Dorsolateral prefrontal cortex (tissue), 120 donors: ENCODE measurements at regions of chr5 and their contacts with region 1.

Region 1: GRCh38 chr5:124773315-124774311 is 27.2 kb upstream of the ZNF608 start:
- DNase-seq: no peak
- H3K4me3 ChIP-seq: peak overlapping the region in 20 of 59 donors; percentile 2 to 35 (median 16)
- H3K27ac ChIP-seq: peak overlapping the region in 15 of 59 donors; percentile 2 to 58 (median 33)
- H3K27me3 ChIP-seq: no peaks in the 10 kb centered on the region
- CTCF ChIP-seq: peak in 2 of 56 donors; percentile 12 to 23

Region 2: GRCh38 chr5:124847907-124848306 is 74.3 kb after region 1 on chr5:
- intact Hi-C with region 1: loop called in 1 of 2 experiments (anchors 2 kb)
- DNase-seq: no peak
- H3K4me3 ChIP-seq: no peak overlapping the region
- H3K27ac ChIP-seq: no peak overlapping the region
- H3K27me3 ChIP-seq: no peaks in the 10 kb centered on the region
- CTCF ChIP-seq: no peak

Region 3: GRCh38 chr5:124888050-124888506 is 114.5 kb after region 1 on chr5:
- intact Hi-C with region 1: loop called in 1 of 2 experiments (anchors 10 kb)
- DNase-seq: no peak
- H3K4me3 ChIP-seq: peak overlapping the region in 32 of 59 donors; percentile 0 to 55 (median 38)
- H3K27ac ChIP-seq: peak overlapping the region in 49 of 59 donors; percentile 32 to 90 (median 80)
- H3K27me3 ChIP-seq: no peaks in the 10 kb centered on the region
- CTCF ChIP-seq: peak in 18 of 56 donors; percentile 6 to 55 (median 22)